ENCODE measurements at regions of chr12 and their contacts with region 1.

Region 1: GRCh38 chr12:49098035-49098451 is 3.4 kb upstream of the DHH start:
- DNase-seq: peak; percentile 58
- H3K4me3 ChIP-seq: no peak overlapping the region
- H3K27ac ChIP-seq: no peak overlapping the region
- H3K4me1 ChIP-seq: peaks cover 19% of the 10 kb centered on the region
- H3K27me3 ChIP-seq: no peaks in the 10 kb centered on the region
- CTCF ChIP-seq: peak; percentile 81 to 91
- POLR2A ChIP-seq: no peak

Region 2: GRCh38 chr12:48788854-48789796 is 308.9 kb before region 1 on chr12 and contains the start of gene ADCY6:
- CTCF ChIA-PET with region 1: no interaction called
- POLR2A ChIA-PET with region 1: no interaction called
- dilution Hi-C with region 1: no loop called
- intact Hi-C with region 1: no loop called
- DNase-seq: peak; percentile 79
- H3K4me3 ChIP-seq: peak within 1 kb of the TSS; percentile 58 to 90 (median 84)
- H3K27ac ChIP-seq: peak within 1 kb of the TSS; percentile 50
- H3K4me1 ChIP-seq: peaks cover 10% of the 10 kb centered on the region
- H3K27me3 ChIP-seq: no peaks in the 10 kb centered on the region
- CTCF ChIP-seq: no peak
- POLR2A ChIP-seq: no peak
- total RNA-seq, gene ADCY6: 43.3 and 46.2 TPM in 2 replicates

Region 3: GRCh38 chr12:49060237-49061156 is 37.5 kb before region 1 on chr12 and contains the start of gene KMT2D:
- CTCF ChIA-PET with region 1: interaction called, 179 read pairs
- POLR2A ChIA-PET with region 1: no interaction called
- dilution Hi-C with region 1: no loop called
- intact Hi-C with region 1: loop called (anchors 1 kb)
- DNase-seq: peak; percentile 92
- H3K4me3 ChIP-seq: peak within 1 kb of the TSS; percentile 73 to 97 (median 77)
- H3K27ac ChIP-seq: peak within 1 kb of the TSS; percentile 93
- H3K4me1 ChIP-seq: peaks cover 39% of the 10 kb centered on the region
- H3K27me3 ChIP-seq: no peaks in the 10 kb centered on the region
- CTCF ChIP-seq: peak; percentile 6 to 13
- POLR2A ChIP-seq: peak; percentile 85
- total RNA-seq, gene KMT2D: 106 and 120 TPM in 2 replicates

Region 4: GRCh38 chr12:49069507-49070346 is 28.3 kb before region 1 on chr12 and contains the start of gene RHEBL1:
- CTCF ChIA-PET with region 1: interaction called, 179 read pairs
- POLR2A ChIA-PET with region 1: no interaction called
- dilution Hi-C with region 1: no loop called
- intact Hi-C with region 1: loop called (anchors 1 kb)
- DNase-seq: peak; percentile 98
- H3K4me3 ChIP-seq: peak within 1 kb of the TSS; percentile 61 to 81 (median 64)
- H3K27ac ChIP-seq: peak within 1 kb of the TSS; percentile 30
- H3K4me1 ChIP-seq: peaks cover 12% of the 10 kb centered on the region
- H3K27me3 ChIP-seq: no peaks in the 10 kb centered on the region
- CTCF ChIP-seq: peak in 1 of 2 donors; percentile 13
- POLR2A ChIP-seq: peak; percentile 70
- total RNA-seq, gene RHEBL1: 2.3 and 2.6 TPM in 2 replicates

Region 5: DNA sequence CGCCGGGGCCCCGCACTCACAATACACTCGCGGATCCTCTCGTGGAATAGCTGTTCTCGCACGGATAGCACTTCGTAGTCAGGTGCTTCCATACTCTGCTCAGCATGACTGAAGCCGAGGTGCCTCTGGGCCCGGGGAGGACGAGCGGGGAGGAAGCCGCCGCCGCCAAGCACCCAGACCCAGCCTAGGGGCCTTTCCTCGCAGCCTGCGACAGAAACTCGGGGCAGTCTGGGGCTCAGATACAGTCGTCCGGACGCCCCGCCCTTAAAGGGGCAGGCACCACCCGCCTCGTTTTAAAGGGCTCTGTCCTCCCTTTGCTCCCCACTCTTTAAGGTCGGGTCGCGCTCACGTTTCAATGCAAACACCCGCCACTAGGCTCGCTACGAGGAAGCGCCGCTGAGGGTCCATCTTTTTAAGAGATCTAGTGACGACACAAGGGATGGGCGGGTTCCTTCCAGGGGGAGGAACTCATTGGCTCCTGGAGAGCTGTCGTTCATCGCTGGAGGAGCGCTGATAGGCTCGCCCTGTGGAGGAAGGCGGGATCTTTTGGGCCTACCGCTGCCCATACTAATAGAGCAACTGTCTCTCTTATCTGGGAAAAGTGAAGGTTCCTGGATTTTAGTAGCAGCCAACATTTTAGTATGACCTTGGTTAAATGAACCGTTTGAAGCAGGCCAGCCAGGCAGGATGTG is 12.6 kb after region 1 on chr12 and contains the start of gene LMBR1L:
- CTCF ChIA-PET with region 1: interaction called, 44 read pairs
- POLR2A ChIA-PET with region 1: interaction called, 10 read pairs
- dilution Hi-C with region 1: no loop called
- intact Hi-C with region 1: loop called (anchors 1 kb)
- DNase-seq: peak; percentile 98
- H3K4me3 ChIP-seq: peak within 1 kb of the TSS; percentile 36 to 92 (median 68)
- H3K27ac ChIP-seq: peak within 1 kb of the TSS; percentile 36
- H3K4me1 ChIP-seq: peaks cover 20% of the 10 kb centered on the region
- H3K27me3 ChIP-seq: no peaks in the 10 kb centered on the region
- CTCF ChIP-seq: peak in 1 of 2 donors; percentile 43
- POLR2A ChIP-seq: peak; percentile 74
- total RNA-seq, gene LMBR1L: 92.8 and 106 TPM in 2 replicates

Measured in endothelial cell of umbilical vein (primary cell).